GM12878 (cell line): ENCODE measurements at regions of chrX and their contacts with region 1.

Region 1: GRCh38 chrX:47560831-47561652 is at the start of gene ARAF:
- DNase-seq: peak; percentile 95
- ATAC-seq: peak; percentile 92
- H3K4me3 ChIP-seq: peak within 1 kb of the TSS; percentile 70
- H3K27ac ChIP-seq: peak within 1 kb of the TSS; percentile 63
- H3K4me1 ChIP-seq: no peaks in the 10 kb centered on the region; the same call in 1 of the 2 replicates
- H3K27me3 ChIP-seq: no peaks in the 10 kb centered on the region
- CTCF ChIP-seq: no peak
- EP300 ChIP-seq: no peak
- POLR2A ChIP-seq: peak; percentile 94
- RAD21 ChIP-seq: no peak
- polyA plus RNA-seq, gene ARAF: 5.0 to 13.3 TPM

Region 2: GRCh38 chrX:47644557-47645091 is 83.6 kb after region 1 on chrX:
- CTCF ChIA-PET with region 1: interaction called, 10 read pairs
- POLR2A ChIA-PET with region 1: interaction called, 6 read pairs
- RAD21 ChIA-PET with region 1: interaction called, 4 read pairs
- SMC1A ChIA-PET with region 1: interaction called, 4 read pairs
- in situ Hi-C with region 1: loop called (anchors 10 kb)
- intact Hi-C with region 1: loop called (anchors 2 kb)
- DNase-seq: no peak
- ATAC-seq: peak; percentile 90
- H3K4me3 ChIP-seq: no peak overlapping the region
- H3K27ac ChIP-seq: no peak overlapping the region
- H3K4me1 ChIP-seq: no peaks in the 10 kb centered on the region; the same call in 1 of the 2 replicates
- H3K27me3 ChIP-seq: no peaks in the 10 kb centered on the region
- CTCF ChIP-seq: peak; percentile 39 to 59 (median 51); a peak in 4 of 6 replicates
- EP300 ChIP-seq: no peak
- POLR2A ChIP-seq: no peak
- RAD21 ChIP-seq: peak; percentile 19; the same call in 1 of the 2 replicates

Region 3: GRCh38 chrX:47650164-47651042 is 89.4 kb after region 1 on chrX and contains the start of gene ELK1:
- CTCF ChIA-PET with region 1: interaction called, 3 read pairs
- POLR2A ChIA-PET with region 1: interaction called, 6 read pairs
- RAD21 ChIA-PET with region 1: interaction called, 4 read pairs
- SMC1A ChIA-PET with region 1: interaction called, 3 read pairs
- in situ Hi-C with region 1: loop called (anchors 10 kb)
- intact Hi-C with region 1: loop called (anchors 2 kb)
- DNase-seq: peak; percentile 90
- ATAC-seq: peak; percentile 94
- H3K4me3 ChIP-seq: peak within 1 kb of the TSS; percentile 75
- H3K27ac ChIP-seq: peak within 1 kb of the TSS; percentile 76
- H3K4me1 ChIP-seq: peaks cover 2% of the 10 kb centered on the region; the same call in 1 of the 2 replicates
- H3K27me3 ChIP-seq: no peaks in the 10 kb centered on the region
- CTCF ChIP-seq: no peak
- EP300 ChIP-seq: no peak
- POLR2A ChIP-seq: peak; percentile 87
- RAD21 ChIP-seq: no peak
- polyA plus RNA-seq, gene ELK1: 4.1 to 6.3 TPM

Region 4: GRCh38 chrX:47751670-47752069 is 190.6 kb after region 1 on chrX:
- CTCF ChIA-PET with region 1: no interaction called
- POLR2A ChIA-PET with region 1: no interaction called
- RAD21 ChIA-PET with region 1: no interaction called
- SMC1A ChIA-PET with region 1: no interaction called
- in situ Hi-C with region 1: no loop called
- intact Hi-C with region 1: loop called (anchors 5 kb)
- DNase-seq: no peak
- ATAC-seq: peak; percentile 79
- H3K4me3 ChIP-seq: no peak overlapping the region
- H3K27ac ChIP-seq: no peak overlapping the region
- H3K4me1 ChIP-seq: no peaks in the 10 kb centered on the region
- H3K27me3 ChIP-seq: no peaks in the 10 kb centered on the region
- CTCF ChIP-seq: peak; percentile 36 to 49 (median 48); a peak in 4 of 6 replicates
- EP300 ChIP-seq: no peak
- POLR2A ChIP-seq: no peak
- RAD21 ChIP-seq: peak; percentile 59

Region 5: GRCh38 chrX:47836164-47837072 is 275.4 kb after region 1 on chrX and contains the start of gene ZNF81:
- CTCF ChIA-PET with region 1: no interaction called
- POLR2A ChIA-PET with region 1: interaction called, 5 read pairs
- RAD21 ChIA-PET with region 1: no interaction called
- SMC1A ChIA-PET with region 1: no interaction called
- in situ Hi-C with region 1: no loop called
- intact Hi-C with region 1: loop called (anchors 5 kb)
- DNase-seq: peak; percentile 91
- ATAC-seq: peak; percentile 97
- H3K4me3 ChIP-seq: peak within 1 kb of the TSS; percentile 66
- H3K27ac ChIP-seq: peak within 1 kb of the TSS; percentile 50
- H3K4me1 ChIP-seq: no peaks in the 10 kb centered on the region
- H3K27me3 ChIP-seq: no peaks in the 10 kb centered on the region
- CTCF ChIP-seq: no peak
- EP300 ChIP-seq: no peak
- POLR2A ChIP-seq: peak; percentile 85
- RAD21 ChIP-seq: no peak
- polyA plus RNA-seq, gene ZNF81: 3.4 to 4.3 TPM